ENCODE measurements at regions of chr4 and their contacts with region 1.

Region 1: GRCh38 chr4:151760712-151761527 is at the start of gene GATB:
- DNase-seq: peak; percentile 95
- ATAC-seq: peak; percentile 100
- H3K4me3 Mint-ChIP-seq: peak within 1 kb of the TSS; percentile 100
- H3K27ac Mint-ChIP-seq: peak within 1 kb of the TSS; percentile 99
- H3K4me1 Mint-ChIP-seq: peaks cover 18% of the 10 kb centered on the region
- H3K27me3 Mint-ChIP-seq: no peaks in the 10 kb centered on the region
- total RNA-seq, gene GATB: 21.2 to 25.6 TPM

Region 2: DNA sequence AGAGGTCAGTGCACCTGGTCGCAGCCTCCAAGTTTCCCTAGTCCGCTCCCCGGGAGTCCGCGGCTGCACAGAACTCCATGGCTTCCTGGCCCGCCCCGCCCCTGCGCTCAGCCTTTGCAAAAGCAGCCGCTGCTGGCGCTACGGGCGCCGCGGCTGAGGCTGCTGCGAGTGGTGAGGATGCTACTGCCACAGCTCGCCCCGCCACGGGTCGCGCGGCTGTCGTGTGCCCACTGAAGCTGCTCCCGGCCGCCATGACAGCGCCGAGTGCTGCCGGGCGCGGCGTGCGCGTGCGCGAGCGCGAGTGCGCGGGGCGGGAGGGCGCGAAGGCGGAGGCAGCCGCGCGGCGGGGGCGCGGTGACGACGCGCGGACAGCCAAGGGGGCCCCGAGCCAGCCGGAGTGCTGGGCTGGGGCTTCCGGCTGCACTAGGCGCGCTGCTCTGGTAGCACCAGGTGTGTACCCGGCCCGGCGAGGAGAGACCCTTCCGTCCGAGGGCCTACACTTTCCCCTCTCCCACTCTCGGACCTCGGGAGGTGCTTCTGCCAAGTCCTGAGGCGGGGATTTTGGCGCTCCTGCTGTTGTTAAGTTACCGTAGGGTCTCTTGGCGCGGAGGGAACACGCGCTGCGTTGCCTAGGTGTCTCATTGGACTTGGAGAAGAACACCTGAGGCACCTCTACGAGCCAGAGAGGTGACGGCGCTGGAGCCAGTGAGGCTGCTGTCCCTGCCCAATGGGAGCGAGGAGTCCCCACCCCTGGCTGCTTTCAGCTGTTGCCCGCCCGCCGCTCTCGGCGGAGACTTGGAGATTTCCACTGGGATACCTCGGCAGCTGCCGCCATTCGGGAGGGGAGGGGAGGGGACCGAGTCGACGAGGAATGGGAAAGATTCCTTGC is 745.2 kb before region 1 on chr4:
- CTCF ChIA-PET with region 1: no interaction called
- POLR2A ChIA-PET with region 1: no interaction called
- intact Hi-C with region 1: loop called in 1 of 2 experiments (anchors 1 kb)
- DNase-seq: peak; percentile 89
- ATAC-seq: peak; percentile 81
- H3K4me3 Mint-ChIP-seq: peak overlapping the region; percentile 90
- H3K27ac Mint-ChIP-seq: peak overlapping the region; percentile 99
- H3K4me1 Mint-ChIP-seq: peaks cover 24% of the 10 kb centered on the region
- H3K27me3 Mint-ChIP-seq: no peaks in the 10 kb centered on the region

Region 3: GRCh38 chr4:151408630-151409469 is 352.1 kb before region 1 on chr4 and contains the start of gene FHIP1A:
- CTCF ChIA-PET with region 1: no interaction called
- POLR2A ChIA-PET with region 1: no interaction called
- intact Hi-C with region 1: loop called in 1 of 2 experiments (anchors 5 kb)
- DNase-seq: peak; percentile 87
- ATAC-seq: peak; percentile 91
- H3K4me3 Mint-ChIP-seq: peak within 1 kb of the TSS; percentile 83
- H3K27ac Mint-ChIP-seq: peak within 1 kb of the TSS; percentile 64
- H3K4me1 Mint-ChIP-seq: peaks cover 18% of the 10 kb centered on the region
- H3K27me3 Mint-ChIP-seq: peaks cover 32% of the 10 kb centered on the region
- total RNA-seq, gene FHIP1A: 0.19 to 0.39 TPM

Region 4: DNA sequence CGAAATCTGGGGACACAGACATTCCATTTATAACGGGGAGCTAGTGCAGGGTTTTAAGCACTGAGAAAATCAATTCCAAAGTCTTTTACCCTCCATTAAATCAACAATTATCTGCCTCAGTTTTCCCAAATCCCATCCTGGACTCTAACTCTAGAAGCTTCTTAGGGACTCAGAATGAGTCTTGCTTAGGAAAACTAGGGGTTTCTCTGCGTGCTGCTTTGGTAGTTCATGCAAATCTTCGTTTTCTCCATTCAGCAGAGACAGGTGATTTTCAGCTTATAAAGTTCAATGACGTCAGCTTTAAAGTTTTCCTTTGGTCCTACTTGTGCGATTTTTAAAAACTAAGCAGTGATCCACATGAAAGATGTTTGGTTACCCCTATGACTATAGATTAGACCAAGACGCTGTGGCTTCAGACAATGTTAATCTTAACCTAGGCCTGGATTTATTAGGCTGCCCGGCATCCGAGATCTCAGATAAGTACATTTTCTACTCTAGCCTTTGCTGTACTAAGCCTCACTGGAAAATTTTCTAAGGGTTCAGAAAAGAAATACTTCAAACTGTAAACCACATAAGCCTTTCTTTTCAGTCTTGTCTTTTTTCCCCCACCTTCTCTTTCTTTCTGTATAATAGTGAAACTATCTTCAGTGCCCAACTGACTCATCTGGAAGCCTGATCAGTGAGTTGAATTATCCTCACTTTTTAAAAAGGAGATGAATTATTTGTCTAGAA is 121.3 kb after region 1 on chr4:
- CTCF ChIA-PET with region 1: no interaction called
- POLR2A ChIA-PET with region 1: no interaction called
- intact Hi-C with region 1: loop called (anchors 1 to 2 kb)
- DNase-seq: no peak
- ATAC-seq: peak; percentile 83
- H3K4me3 Mint-ChIP-seq: no peak overlapping the region
- H3K27ac Mint-ChIP-seq: peak overlapping the region; percentile 88
- H3K4me1 Mint-ChIP-seq: peaks cover 38% of the 10 kb centered on the region
- H3K27me3 Mint-ChIP-seq: no peaks in the 10 kb centered on the region

Region 5: GRCh38 chr4:152100379-152101201 is 339.7 kb after region 1 on chr4:
- CTCF ChIA-PET with region 1: no interaction called
- POLR2A ChIA-PET with region 1: no interaction called
- intact Hi-C with region 1: loop called in 1 of 2 experiments (anchors 2 kb)
- DNase-seq: peak; percentile 86
- ATAC-seq: peak; percentile 90
- H3K4me3 Mint-ChIP-seq: peak overlapping the region; percentile 66
- H3K27ac Mint-ChIP-seq: peak overlapping the region; percentile 96
- H3K4me1 Mint-ChIP-seq: peaks cover 88% of the 10 kb centered on the region
- H3K27me3 Mint-ChIP-seq: no peaks in the 10 kb centered on the region

Measured in activated CD4-positive, alpha-beta T cell treated with anti-CD3 and anti-CD28 coated beads for 36 hours (primary cell).